ENCODE measurements at regions of chr1 and their contacts with region 1.

Region 1: DNA sequence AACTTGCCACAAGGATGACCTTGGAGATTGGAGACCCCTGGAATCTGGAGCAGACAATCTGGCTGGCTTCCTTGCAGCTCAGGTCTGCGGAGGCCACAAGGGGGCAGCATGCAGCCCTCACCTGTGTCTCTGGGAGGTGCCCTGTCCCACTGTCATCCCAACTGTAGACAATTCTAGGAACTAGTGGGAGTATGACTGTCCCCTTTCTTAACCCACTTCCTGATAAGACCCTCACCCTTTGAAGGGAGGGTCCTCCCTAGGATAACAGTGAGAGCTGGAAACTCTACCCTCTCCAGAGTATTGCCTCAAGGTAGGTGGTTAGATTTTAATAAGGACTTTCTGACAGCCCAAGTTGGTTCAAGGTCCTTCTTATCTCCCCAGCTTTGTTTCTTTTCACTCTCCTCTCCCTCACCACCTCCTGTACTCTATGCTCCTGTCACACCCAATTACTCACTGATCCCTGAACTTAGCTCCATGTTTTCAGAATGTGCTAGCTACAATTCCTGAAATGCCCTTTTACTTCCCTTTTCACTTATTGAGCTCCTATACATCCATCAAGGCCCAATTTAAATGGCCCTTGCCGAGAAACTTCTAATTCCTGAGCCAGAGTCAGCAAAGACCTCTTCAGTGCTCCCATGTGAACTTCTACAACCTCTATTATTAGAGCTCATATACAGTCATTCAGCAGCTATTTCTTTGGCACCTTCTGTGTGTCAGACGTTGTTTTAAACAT is 9.2 kb upstream of the KCNQ4 start:
- DNase-seq: peak; percentile 68
- CTCF ChIP-seq: peak; percentile 84

Region 2: DNA sequence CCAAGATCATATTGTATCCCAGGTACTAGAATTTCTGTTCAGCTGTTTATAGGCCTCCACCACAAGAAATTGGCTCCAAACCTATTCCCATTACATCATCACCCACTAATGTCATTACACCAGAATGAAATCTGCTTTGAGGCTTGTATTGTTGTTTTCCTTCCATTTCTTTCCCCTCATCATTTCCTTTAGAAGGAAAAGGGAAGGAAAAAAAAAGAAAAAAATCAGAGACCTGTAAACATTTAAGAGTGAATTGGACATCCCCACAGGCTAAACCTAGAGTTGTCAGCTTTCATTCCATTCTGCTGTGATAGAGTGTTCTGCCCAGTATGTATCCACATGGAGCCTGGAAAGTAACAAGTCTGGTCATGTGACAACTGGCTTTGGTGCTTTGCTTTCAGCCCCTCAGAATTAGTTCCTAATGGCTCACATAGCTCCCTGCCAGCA is 38.3 kb before region 1 on chr1:
- CTCF ChIA-PET with region 1: interaction called, 19 read pairs
- POLR2A ChIA-PET with region 1: no interaction called
- DNase-seq: no peak
- CTCF ChIP-seq: no peak

Region 3: DNA sequence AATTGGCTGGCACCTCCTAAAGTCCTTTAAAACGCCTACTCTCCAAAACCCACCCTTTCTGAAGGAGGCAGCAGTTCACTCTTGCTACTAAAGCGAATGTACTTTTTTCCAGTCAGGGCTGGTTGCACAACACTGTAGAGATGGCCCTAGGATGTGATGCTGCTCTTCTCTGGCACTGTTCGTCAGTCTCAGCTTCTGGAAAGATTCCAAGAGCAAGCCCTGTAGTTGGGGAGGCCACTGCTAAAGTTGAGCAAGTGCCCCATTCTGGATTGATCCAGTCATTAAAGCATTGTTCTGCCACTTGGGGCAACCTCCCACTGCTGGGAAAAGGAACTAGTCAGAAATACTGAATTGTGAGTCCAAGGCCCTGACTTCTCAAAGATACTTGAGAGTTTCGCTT is 19.4 kb before region 1 on chr1:
- CTCF ChIA-PET with region 1: interaction called, 232 read pairs
- POLR2A ChIA-PET with region 1: no interaction called
- DNase-seq: no peak
- CTCF ChIP-seq: no peak

Region 4: DNA sequence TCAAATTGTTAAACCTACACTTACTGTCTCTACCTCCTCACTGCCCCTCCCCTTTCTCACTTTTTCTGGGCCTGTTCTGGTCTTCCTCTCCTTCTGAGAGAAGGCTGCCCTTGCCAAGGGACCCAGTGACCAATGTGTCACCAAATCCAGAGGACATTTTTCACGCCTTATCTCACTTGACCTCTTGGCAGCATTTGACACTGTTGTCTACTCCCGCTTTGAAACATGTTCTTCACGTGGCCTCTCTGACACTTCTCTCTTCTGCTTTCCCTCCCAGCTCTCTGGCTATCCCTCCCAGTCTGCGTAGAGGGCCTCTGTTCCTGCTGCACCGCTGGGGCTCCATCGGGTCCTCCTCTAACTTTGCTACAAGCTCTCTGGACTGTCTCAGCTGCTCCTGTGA is 34.5 kb after region 1 on chr1:
- CTCF ChIA-PET with region 1: interaction called, 37 read pairs
- POLR2A ChIA-PET with region 1: no interaction called
- DNase-seq: no peak
- CTCF ChIP-seq: no peak

Region 5: GRCh38 chr1:40862008-40862863 is 87.8 kb after region 1 on chr1 and contains the start of gene CITED4:
- CTCF ChIA-PET with region 1: interaction called, 11 read pairs
- POLR2A ChIA-PET with region 1: no interaction called
- DNase-seq: peak; percentile 98
- CTCF ChIP-seq: peak; percentile 2

Region 6: DNA sequence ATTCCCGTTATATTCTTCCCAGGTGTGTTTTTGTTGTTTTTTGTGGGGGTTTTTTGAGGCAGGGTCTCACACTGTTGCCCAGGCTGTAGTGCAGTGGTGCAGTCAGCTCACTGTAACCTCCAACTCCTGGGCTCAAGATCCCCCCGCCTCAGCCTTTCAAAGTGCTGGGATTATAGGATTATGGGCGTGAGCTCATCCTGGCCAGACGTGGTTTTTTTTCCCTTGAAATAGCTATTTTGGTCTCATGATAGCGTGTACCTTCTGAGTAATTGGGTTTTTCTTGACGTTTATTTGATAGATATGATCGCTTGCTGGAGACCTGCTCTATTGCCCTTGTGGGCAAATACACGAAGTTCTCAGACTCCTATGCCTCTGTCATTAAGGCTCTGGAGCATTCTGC is 222.7 kb after region 1 on chr1:
- CTCF ChIA-PET with region 1: no interaction called
- POLR2A ChIA-PET with region 1: no interaction called
- DNase-seq: no peak
- CTCF ChIP-seq: no peak

Measured in GM10248 (cell line).